ENCODE measurements at regions of chr2 and their contacts with region 1.

Region 1: GRCh38 chr2:64359892-64360657 is 93.9 kb upstream of the LGALSL start:
- DNase-seq: peak; percentile 93 to 98
- H3K4me3 ChIP-seq: peak overlapping the region; percentile 29; the same call in 1 of the 2 replicates
- H3K27ac ChIP-seq: peak overlapping the region; percentile 94
- H3K4me1 ChIP-seq: peaks cover 67% of the 10 kb centered on the region
- H3K27me3 ChIP-seq: no peaks in the 10 kb centered on the region
- CTCF ChIP-seq: peak; percentile 39; the same call in 1 of the 2 replicates

Region 2: DNA sequence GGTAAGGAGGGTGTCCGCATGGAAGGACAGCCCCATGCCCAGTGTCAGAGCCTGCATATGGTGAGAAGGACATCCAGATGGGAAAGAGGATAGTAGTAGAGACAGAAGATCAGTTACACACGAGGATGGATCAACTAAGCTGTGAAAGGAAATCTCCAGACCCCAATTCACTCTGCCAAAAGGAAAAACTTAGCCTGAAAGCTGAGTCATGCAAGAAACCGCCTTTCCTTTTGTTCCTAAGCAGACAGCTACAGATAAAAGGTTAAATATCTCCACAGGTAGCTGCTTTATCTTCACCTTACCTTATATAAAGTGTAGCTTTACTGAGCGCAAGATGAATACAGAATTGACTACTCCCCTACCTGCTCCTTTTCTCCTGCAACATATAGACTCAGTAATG is 26.6 kb after region 1 on chr2:
- CTCF ChIA-PET with region 1: no interaction called
- POLR2A ChIA-PET with region 1: interaction called, 11 read pairs
- intact Hi-C with region 1: no loop called
- DNase-seq: no peak
- H3K4me3 ChIP-seq: no peak overlapping the region
- H3K27ac ChIP-seq: no peak overlapping the region
- H3K4me1 ChIP-seq: peaks cover 23% of the 10 kb centered on the region
- H3K27me3 ChIP-seq: no peaks in the 10 kb centered on the region
- CTCF ChIP-seq: no peak

Region 3: GRCh38 chr2:64400733-64401500 is 40.8 kb after region 1 on chr2:
- CTCF ChIA-PET with region 1: interaction called, 3 read pairs
- POLR2A ChIA-PET with region 1: interaction called, 4 read pairs
- intact Hi-C with region 1: loop called (anchors 2 kb)
- DNase-seq: peak; percentile 65 to 86
- H3K4me3 ChIP-seq: peak overlapping the region; percentile 5; the same call in 1 of the 2 replicates
- H3K27ac ChIP-seq: peak overlapping the region; percentile 93
- H3K4me1 ChIP-seq: peaks cover 56% of the 10 kb centered on the region
- H3K27me3 ChIP-seq: no peaks in the 10 kb centered on the region
- CTCF ChIP-seq: no peak

Region 4: GRCh38 chr2:64442801-64443429 is 82.8 kb after region 1 on chr2:
- CTCF ChIA-PET with region 1: no interaction called
- POLR2A ChIA-PET with region 1: no interaction called
- intact Hi-C with region 1: no loop called
- DNase-seq: no peak
- H3K4me3 ChIP-seq: no peak overlapping the region
- H3K27ac ChIP-seq: no peak overlapping the region
- H3K4me1 ChIP-seq: 0 out of 2 replicates have a peak, but pooled peaks cover 8% of the 10 kb centered on the region
- H3K27me3 ChIP-seq: no peaks in the 10 kb centered on the region
- CTCF ChIP-seq: no peak

Region 5: GRCh38 chr2:64453770-64454385 is 93.8 kb after region 1 on chr2 and contains the start of gene LGALSL:
- CTCF ChIA-PET with region 1: no interaction called
- POLR2A ChIA-PET with region 1: interaction called, 4 read pairs
- intact Hi-C with region 1: loop called (anchors 1 kb)
- DNase-seq: peak; percentile 71 to 88
- H3K4me3 ChIP-seq: peak within 1 kb of the TSS; percentile 65
- H3K27ac ChIP-seq: peak within 1 kb of the TSS; percentile 99
- H3K4me1 ChIP-seq: peaks cover 22% of the 10 kb centered on the region
- H3K27me3 ChIP-seq: no peaks in the 10 kb centered on the region
- CTCF ChIP-seq: no peak
- total RNA-seq, gene LGALSL: 9.7 and 13.0 TPM in 2 replicates

Region 6: DNA sequence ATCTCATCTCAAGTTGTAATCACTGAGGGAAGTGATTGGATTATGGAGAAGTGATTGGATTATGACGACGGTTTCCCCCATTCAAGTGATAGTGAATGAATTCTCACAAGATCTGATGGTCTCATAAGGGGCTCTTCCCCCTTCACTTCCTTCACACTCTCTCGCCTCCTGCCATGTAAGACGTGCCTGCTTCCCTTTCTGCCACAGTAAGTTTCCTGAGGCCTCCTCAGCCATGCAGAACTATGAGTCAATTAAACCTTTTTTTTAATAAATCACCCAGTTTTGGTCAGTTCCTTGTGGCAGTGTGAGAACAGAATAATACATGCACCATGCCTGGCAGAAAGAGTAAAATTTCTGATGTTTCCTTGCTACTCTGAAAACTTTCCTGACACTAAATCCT is 732.7 kb after region 1 on chr2:
- CTCF ChIA-PET with region 1: no interaction called
- POLR2A ChIA-PET with region 1: no interaction called
- intact Hi-C with region 1: no loop called
- DNase-seq: no peak
- H3K4me3 ChIP-seq: no peak overlapping the region
- H3K27ac ChIP-seq: no peak overlapping the region
- H3K4me1 ChIP-seq: no peaks in the 10 kb centered on the region
- H3K27me3 ChIP-seq: no peaks in the 10 kb centered on the region
- CTCF ChIP-seq: no peak